ENCODE measurements at regions of chr7 and their contacts with region 1.

Region 1: GRCh38 chr7:41930538-41931262 is 227.8 kb upstream of the INHBA start:
- DNase-seq: no peak
- ATAC-seq: no peak
- H3K4me3 ChIP-seq: no peak overlapping the region
- H3K27ac ChIP-seq: no peak overlapping the region
- H3K4me1 ChIP-seq: no peaks in the 10 kb centered on the region
- H3K27me3 ChIP-seq: no peaks in the 10 kb centered on the region
- CTCF ChIP-seq: no peak
- POLR2A ChIP-seq: no peak

Region 2: GRCh38 chr7:41725013-41725412 is 205.7 kb before region 1 on chr7:
- intact Hi-C with region 1: no loop called
- DNase-seq: no peak
- ATAC-seq: no peak
- H3K4me3 ChIP-seq: no peak overlapping the region
- H3K27ac ChIP-seq: no peak overlapping the region
- H3K4me1 ChIP-seq: no peaks in the 10 kb centered on the region
- H3K27me3 ChIP-seq: no peaks in the 10 kb centered on the region
- CTCF ChIP-seq: no peak
- POLR2A ChIP-seq: no peak

Region 3: DNA sequence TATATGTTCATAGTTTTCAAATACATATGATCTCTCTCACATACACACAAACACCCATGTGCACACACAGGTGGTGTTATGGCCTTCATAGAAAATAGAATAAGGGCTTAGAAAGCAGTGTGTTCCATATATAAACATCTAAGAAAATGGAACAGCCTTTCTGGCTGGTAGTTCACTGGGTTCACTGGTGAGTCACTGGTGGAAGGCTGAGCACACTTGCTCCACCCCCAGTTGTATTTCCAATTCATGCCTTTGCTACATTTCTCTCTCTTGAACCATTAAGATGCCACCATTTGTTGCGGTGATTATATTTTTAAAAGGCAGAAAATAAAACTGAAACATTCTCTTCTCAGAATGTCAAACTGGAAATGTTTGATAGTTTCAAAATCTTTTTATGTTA is 54.2 kb after region 1 on chr7:
- intact Hi-C with region 1: no loop called
- DNase-seq: no peak
- ATAC-seq: no peak
- H3K4me3 ChIP-seq: no peak overlapping the region
- H3K27ac ChIP-seq: no peak overlapping the region
- H3K4me1 ChIP-seq: no peaks in the 10 kb centered on the region
- H3K27me3 ChIP-seq: no peaks in the 10 kb centered on the region
- CTCF ChIP-seq: no peak
- POLR2A ChIP-seq: no peak

Region 4: GRCh38 chr7:42831718-42832431 is 901.2 kb after region 1 on chr7:
- intact Hi-C with region 1: loop called (anchors 10 kb)
- DNase-seq: peak; percentile 37 to 65 (median 49)
- ATAC-seq: peak; percentile 38
- H3K4me3 ChIP-seq: no peak overlapping the region
- H3K27ac ChIP-seq: no peak overlapping the region
- H3K4me1 ChIP-seq: no peaks in the 10 kb centered on the region
- H3K27me3 ChIP-seq: no peaks in the 10 kb centered on the region
- CTCF ChIP-seq: peak; percentile 24 to 64 (median 44)
- POLR2A ChIP-seq: no peak